Activated CD4-positive, alpha-beta memory T cell treated with anti-CD3 and anti-CD28 coated beads for 36 hours (primary cell): ENCODE measurements at regions of chr7 and their contacts with region 1.

Region 1: GRCh38 chr7:121395961-121396757 is at the start of gene FAM3C:
- DNase-seq: peak; percentile 92
- H3K4me3 Mint-ChIP-seq: peak within 1 kb of the TSS; percentile 85
- H3K27ac Mint-ChIP-seq: peak within 1 kb of the TSS; percentile 90
- H3K4me1 Mint-ChIP-seq: peaks cover 36% of the 10 kb centered on the region
- H3K27me3 Mint-ChIP-seq: no peaks in the 10 kb centered on the region
- total RNA-seq, gene FAM3C: 17.2 to 18.3 TPM

Region 2: DNA sequence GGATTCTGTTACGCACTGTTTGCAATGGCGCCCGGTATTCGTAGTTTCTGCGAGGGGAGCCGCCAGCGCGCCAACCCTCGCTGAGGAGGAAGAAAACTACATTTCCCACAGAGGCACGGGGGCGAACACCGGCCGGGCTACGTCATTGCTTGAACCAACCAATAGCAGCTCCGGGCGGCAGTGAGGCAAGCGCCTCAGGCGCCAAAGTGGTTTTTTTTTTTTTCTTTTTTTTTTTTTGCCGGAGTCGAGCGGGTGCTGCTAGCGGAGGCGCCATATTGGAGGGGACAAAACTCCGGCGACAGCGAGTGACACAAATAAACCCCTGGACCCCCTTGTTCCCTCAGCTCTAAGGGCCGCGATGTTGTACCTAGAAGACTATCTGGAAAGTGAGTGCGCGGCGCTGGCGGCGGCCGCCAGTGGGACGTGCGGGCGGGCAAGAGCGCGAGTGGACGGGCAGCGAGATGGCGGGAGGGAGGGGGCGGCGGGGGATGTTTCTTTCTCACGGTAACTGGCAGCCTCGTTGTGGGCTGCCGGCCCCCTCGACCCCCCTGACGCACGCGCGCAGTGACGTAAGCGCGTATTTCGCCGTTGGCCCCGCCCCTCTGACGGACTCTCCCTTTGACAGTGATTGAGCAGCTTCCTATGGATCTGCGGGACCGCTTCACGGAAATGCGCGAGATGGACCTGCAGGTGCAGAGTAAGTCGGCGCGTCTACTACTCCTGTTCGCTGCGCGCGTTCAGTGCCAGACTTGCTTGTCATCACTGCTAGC is 445.4 kb before region 1 on chr7 and contains the start of gene ING3:
- CTCF ChIA-PET with region 1: no interaction called
- POLR2A ChIA-PET with region 1: no interaction called
- intact Hi-C with region 1: loop called (anchors 2 kb)
- DNase-seq: peak; percentile 98
- H3K4me3 Mint-ChIP-seq: peak within 1 kb of the TSS; percentile 94
- H3K27ac Mint-ChIP-seq: peak within 1 kb of the TSS; percentile 98
- H3K4me1 Mint-ChIP-seq: peaks cover 22% of the 10 kb centered on the region
- H3K27me3 Mint-ChIP-seq: peaks cover 9% of the 10 kb centered on the region
- total RNA-seq, gene ING3: 23.5 to 24.8 TPM

Region 3: GRCh38 chr7:121372376-121373010 is 23.7 kb before region 1 on chr7:
- CTCF ChIA-PET with region 1: interaction called, 31 read pairs
- POLR2A ChIA-PET with region 1: interaction called, 7 read pairs
- intact Hi-C with region 1: loop called (anchors 2 kb)
- DNase-seq: no peak
- H3K4me3 Mint-ChIP-seq: no peak overlapping the region
- H3K27ac Mint-ChIP-seq: peak overlapping the region; percentile 60
- H3K4me1 Mint-ChIP-seq: peaks cover 17% of the 10 kb centered on the region
- H3K27me3 Mint-ChIP-seq: no peaks in the 10 kb centered on the region

Region 4: DNA sequence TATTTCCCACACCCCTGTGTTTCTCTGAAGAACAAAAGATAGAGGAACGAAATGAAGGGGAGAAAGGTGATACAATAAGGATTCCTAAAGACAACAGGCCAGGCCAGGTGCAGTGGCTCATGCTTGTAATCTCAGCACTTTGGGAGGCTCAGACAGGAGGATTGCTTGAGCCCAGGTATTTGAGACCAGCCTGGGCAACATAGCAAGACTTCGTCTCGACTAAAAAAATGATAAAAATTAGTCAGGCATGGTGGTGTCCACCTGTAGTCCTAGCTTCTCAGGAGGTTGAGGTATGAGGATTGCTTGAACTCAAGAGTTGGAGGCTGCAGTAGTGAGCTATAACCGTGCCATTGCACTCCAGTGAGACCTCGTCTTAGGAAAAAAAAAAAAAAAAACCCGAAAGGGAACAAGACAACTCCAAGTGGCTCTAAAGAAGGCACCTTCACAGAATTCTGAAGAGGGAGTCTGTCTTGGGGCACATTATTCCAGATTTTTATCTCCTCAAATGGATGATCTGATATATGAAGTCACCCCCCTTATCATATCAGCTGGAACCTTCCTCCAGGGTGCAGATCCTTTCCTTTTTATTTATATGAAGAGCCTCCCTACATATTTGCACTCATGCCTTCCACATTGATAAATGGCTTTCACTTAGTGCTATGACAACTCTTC is 41.4 kb after region 1 on chr7:
- CTCF ChIA-PET with region 1: interaction called, 11 read pairs
- POLR2A ChIA-PET with region 1: interaction called, 3 read pairs
- intact Hi-C with region 1: loop called (anchors 1 kb)
- DNase-seq: no peak
- H3K4me3 Mint-ChIP-seq: no peak overlapping the region
- H3K27ac Mint-ChIP-seq: peak overlapping the region; percentile 74
- H3K4me1 Mint-ChIP-seq: peaks cover 30% of the 10 kb centered on the region
- H3K27me3 Mint-ChIP-seq: no peaks in the 10 kb centered on the region

Region 5: DNA sequence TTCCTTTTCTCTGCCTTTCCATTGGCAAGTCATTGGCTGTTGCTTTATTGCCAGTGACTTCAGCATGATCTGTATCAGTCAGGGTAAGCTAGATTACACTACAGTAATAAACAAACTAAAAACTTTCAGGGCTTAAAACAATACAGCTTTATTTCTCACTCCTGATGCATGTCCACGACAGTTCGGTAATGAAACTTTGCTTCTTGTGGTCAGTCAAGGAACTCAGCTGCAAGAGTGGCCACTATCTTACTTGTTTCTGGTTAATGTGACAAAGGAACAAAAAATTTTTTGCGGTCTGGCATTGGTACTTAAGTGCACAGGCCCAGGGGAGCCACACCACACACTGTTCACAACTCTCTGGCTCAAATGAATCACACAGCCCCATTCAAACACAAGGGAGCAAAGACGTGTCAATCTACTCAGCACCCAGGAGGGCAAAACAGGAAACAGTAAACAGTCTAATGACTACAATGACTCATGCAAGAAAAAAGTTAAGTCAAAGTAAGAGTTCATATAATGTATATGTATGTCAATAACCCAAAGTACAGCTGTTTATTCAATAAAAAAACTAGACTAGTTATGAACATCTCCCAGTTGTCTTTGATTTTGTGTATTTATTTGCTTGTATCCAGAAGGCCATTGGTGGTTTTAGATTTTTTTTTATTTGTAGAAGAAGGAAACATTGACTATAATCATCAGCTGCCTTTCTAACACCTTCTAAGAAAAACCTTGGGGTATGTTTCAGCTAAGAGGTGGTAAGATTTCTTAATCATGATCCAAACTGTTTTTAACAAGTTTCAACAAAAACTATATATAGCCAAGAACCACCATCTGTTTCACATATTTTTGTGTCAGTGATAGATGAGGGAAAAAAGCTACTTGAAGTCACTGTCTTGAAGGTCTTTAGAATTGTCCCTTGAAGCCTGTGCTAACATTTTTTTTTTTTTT is 134.3 kb after region 1 on chr7:
- CTCF ChIA-PET with region 1: interaction called, 9 read pairs
- POLR2A ChIA-PET with region 1: interaction called, 12 read pairs
- intact Hi-C with region 1: loop called (anchors 1 kb)
- DNase-seq: peak; percentile 74
- H3K4me3 Mint-ChIP-seq: peak overlapping the region; percentile 21
- H3K27ac Mint-ChIP-seq: peak overlapping the region; percentile 87
- H3K4me1 Mint-ChIP-seq: peaks cover 21% of the 10 kb centered on the region
- H3K27me3 Mint-ChIP-seq: no peaks in the 10 kb centered on the region